Activated T-helper 2 cell treated with anti-CD3 and anti-CD28 coated beads, Interferon-gamma antibody, Interleukin-2, Interleukin-4, amounts not matched to agents 10 μg/mL and 5 μg/mL and 100 μg/mL, durations not matched to agents 14 hours and 24 hours and 36 hours (primary cell): ENCODE measurements at regions of chr4 and their contacts with region 1.

Region 1: DNA sequence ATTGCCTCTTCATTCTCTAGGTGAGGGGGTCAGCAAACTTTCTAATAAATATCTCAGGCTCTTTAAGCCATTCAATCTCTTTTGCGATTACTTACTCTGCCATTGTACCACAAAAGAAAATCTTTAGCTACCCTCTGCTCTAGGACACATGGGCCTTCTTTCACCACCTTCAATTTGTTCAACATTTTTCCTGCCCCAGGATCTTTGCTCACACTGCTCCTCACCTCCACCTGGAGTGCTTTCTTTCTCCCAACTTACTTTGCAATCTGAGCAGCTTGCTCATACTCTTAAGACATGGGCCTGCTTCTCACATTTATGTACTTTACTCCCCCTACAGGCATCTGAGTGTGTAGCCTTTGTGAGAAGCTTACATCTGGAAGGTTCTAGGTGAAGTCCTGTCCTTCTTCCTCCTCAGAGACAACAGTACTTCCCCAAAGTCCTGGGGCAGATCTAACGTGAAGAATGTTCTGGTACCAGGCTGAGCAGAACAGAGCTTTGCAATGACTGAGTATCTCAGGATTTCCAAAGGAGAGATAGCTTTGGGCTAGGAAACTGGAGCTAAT is 55.0 kb upstream of the PRDM5 start:
- DNase-seq: no peak
- H3K4me3 Mint-ChIP-seq: no peak overlapping the region
- H3K27ac Mint-ChIP-seq: no peak overlapping the region
- H3K4me1 Mint-ChIP-seq: no peaks in the 10 kb centered on the region
- H3K27me3 Mint-ChIP-seq: peaks cover 4% of the 10 kb centered on the region

Region 2: DNA sequence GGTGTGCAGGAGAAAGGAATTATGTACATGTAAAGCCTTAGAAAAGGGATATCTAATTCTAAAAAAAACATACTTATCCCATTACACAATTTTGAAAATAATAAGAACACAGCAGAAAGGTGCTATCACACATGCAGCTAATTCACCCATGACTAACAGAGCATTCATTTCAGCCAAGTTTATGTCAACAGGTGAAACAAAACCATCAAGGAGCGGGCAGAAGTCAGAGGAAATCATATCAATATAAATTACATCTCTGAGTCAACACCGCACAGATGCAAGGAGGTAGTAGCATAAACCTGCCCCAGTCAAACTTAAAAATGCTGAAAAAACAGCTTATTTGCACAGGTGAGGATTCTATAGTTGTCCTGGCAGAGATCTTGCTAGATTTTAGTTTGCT is 252.9 kb before region 1 on chr4:
- intact Hi-C with region 1: loop called (anchors 5 kb)
- DNase-seq: no peak
- H3K4me3 Mint-ChIP-seq: no peak overlapping the region
- H3K27ac Mint-ChIP-seq: no peak overlapping the region
- H3K4me1 Mint-ChIP-seq: peaks cover 7% of the 10 kb centered on the region
- H3K27me3 Mint-ChIP-seq: peaks cover 9% of the 10 kb centered on the region

Region 3: DNA sequence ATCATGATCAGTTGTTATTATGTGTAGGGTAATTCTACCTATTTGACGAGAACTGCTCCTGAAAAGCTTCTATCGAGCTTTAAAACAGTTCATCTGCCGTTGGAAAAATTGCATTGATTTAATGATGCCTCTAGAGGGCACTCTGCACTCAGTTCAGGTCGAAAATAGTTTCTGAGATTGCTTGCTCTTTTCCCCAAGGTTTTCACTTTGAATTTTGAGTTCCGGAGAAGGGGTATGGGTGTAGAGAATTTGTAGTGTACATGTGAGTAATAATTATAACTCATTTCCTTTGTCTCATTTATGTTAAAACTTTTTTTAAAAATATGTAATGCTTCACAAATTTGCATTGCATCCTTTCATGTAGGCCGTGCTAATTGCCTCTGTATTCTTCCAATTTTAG is 215.0 kb after region 1 on chr4:
- intact Hi-C with region 1: no loop called
- DNase-seq: no peak
- H3K4me3 Mint-ChIP-seq: peak overlapping the region; percentile 55
- H3K27ac Mint-ChIP-seq: no peak overlapping the region
- H3K4me1 Mint-ChIP-seq: peaks cover 52% of the 10 kb centered on the region
- H3K27me3 Mint-ChIP-seq: no peaks in the 10 kb centered on the region